Colonic mucosa (tissue), 4 donors: ENCODE measurements at regions of chr2 and their contacts with region 1.

Region 1: DNA sequence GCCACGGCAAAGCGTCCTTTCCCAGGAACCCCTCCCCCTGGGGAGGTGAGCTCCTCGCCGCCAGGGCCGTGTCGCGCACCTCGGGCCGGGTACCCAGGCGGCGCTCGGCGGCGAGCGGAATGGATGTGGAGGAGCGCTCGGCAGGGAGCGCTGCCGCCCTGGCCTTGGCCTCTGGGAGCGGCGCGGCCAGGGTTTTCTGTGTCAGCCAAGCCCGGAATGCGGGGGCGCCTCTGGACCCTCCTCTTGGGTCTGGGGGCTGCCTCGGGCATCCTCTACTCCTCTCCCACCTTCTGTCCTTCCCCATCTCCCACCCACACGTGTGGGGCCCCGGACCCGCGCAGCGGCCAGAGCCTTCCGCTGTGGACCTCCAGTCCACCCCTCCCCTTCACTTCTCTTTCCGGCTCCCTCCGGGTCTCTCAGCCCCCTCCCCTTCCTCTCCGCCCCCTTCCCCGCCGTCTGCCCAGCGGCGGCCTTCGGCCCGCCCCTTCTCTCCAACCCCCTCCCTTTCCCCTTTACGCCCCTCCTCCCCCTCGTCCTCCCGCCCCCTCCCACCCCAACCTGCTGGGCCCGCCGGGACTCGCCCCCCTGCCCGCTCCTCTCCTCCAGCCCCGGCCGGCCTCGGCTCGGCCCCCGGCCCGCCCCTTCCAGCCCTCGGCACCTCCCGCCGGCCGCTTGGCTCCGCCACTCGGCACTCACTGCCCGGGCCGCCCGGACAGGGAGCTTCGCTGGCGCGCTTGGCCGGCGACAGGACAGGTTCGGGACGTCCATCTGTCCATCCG is at the start of gene MERTK:
- DNase-seq: peak; percentile 72
- H3K4me3 ChIP-seq: peak within 1 kb of the TSS; percentile 60
- H3K27ac ChIP-seq: peak within 1 kb of the TSS; percentile 71
- H3K4me1 ChIP-seq: peaks cover 5% of the 10 kb centered on the region
- H3K27me3 ChIP-seq: no peaks in the 10 kb centered on the region
- CTCF ChIP-seq: peak; percentile 45
- total RNA-seq, gene MERTK: 3.9 TPM

Region 2: GRCh38 chr2:111967018-111967417 is 68.9 kb after region 1 on chr2:
- intact Hi-C with region 1: loop called (anchors 10 kb)
- DNase-seq: no peak
- H3K4me3 ChIP-seq: no peak overlapping the region
- H3K27ac ChIP-seq: no peak overlapping the region
- H3K4me1 ChIP-seq: no peaks in the 10 kb centered on the region
- H3K27me3 ChIP-seq: no peaks in the 10 kb centered on the region
- CTCF ChIP-seq: no peak

Region 3: DNA sequence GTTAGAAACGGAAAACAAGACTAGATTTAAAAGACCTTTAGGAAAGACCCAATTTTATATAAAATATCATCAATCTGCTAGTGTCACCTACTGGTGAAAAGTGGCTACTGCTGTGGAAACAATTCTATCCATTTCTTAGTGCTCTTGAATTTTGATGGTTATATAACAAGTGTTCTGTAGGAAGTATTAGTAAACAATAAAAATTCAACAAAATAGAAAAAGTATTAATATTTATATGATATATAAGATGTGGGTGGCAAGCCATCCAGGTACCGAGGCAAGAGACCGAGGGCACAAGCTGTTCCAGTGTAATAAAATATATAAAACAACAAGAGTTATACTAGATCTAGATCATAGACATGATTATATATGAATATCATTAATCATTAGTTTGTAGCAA is 150.8 kb after region 1 on chr2:
- intact Hi-C with region 1: loop called (anchors 5 kb)
- DNase-seq: peak; percentile 65
- H3K4me3 ChIP-seq: no peak overlapping the region
- H3K27ac ChIP-seq: no peak overlapping the region
- H3K4me1 ChIP-seq: no peaks in the 10 kb centered on the region
- H3K27me3 ChIP-seq: no peaks in the 10 kb centered on the region
- CTCF ChIP-seq: peak; percentile 86